ENCODE measurements at regions of chr2 and their contacts with region 1.

Region 1: DNA sequence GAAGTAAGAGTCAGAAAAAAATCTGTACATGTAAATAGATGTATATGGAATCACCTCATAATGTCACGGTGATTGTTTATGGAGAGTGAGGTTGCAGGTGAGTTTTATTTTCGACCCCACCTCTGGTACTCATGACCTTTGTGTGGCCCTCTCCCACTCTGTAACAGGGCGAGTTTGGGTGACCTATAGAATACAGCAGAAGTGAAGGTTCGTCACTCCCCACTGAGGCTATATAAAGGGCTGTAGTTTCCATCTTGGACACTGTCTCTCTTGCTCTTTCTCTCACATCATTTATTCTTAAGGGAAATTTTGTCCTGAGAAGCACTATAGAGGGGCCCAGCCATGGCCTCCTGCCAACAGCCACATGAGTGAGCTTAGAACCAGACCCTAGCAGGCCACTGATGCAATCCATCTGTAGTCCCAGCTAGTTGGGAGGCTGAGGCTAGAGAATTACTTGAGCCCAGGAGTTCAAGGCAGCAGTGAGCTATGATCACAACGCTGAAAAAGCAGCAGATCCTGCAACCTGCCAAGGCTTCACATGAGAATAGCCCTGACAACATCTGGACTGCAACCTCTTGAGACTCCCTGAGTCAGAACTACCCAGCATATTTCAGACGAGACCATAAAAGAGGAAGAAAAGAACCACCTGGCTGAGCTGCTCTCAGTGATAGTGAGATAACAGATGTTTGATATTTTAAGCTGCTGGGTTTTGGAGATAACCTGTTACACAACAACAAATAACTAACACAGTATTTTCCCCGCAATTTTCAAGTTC is 74.3 kb upstream of the SLC1A4 start:
- DNase-seq: no peak
- H3K4me3 Mint-ChIP-seq: no peak overlapping the region
- H3K27ac Mint-ChIP-seq: no peak overlapping the region
- H3K4me1 Mint-ChIP-seq: no peaks in the 10 kb centered on the region
- H3K27me3 Mint-ChIP-seq: no peaks in the 10 kb centered on the region
- CTCF ChIP-seq: no peak

Region 2: DNA sequence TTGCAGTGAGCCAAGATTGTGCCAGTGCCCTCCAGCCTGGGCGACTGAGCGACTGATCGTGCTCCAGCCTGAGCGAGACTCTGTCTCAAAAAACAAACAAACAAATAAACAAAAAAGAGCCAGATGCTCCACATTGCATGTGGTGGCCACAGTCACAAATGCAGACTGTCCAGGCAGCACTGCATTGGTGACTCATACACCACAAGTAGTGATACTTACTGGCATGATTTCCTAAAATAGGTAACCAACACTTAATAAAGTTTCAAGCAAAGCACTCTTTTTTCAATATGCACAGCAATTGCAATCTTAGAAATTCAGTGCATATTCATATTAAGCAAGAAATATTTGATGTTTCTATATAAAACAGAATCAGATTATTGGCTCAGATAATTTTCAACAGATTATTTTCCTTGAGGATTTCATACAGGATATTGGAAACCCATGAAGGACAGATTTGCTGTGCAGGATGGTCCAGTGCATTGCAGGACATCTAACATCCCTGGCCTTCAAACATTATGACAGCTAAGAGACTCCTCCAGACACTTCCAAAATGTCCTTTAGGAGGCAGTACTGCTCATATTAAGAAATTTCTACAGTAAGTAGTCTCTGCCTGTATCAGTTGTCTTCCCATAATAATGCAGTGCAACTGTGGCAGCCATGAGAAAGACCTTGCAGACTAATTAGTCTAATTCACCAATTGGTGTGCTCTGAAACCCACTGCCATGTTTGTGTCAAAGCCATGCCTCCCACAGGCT is 63.8 kb after region 1 on chr2:
- CTCF ChIA-PET with region 1: interaction called, 11 read pairs
- POLR2A ChIA-PET with region 1: interaction called, 3 read pairs
- intact Hi-C with region 1: no loop called
- DNase-seq: peak; percentile 45
- H3K4me3 Mint-ChIP-seq: no peak overlapping the region
- H3K27ac Mint-ChIP-seq: no peak overlapping the region
- H3K4me1 Mint-ChIP-seq: peaks cover 32% of the 10 kb centered on the region
- H3K27me3 Mint-ChIP-seq: no peaks in the 10 kb centered on the region
- CTCF ChIP-seq: no peak

Region 3: GRCh38 chr2:65024149-65024829 is 109.4 kb after region 1 on chr2:
- CTCF ChIA-PET with region 1: interaction called, 36 read pairs
- POLR2A ChIA-PET with region 1: no interaction called
- intact Hi-C with region 1: no loop called
- DNase-seq: peak; percentile 57
- H3K4me3 Mint-ChIP-seq: no peak overlapping the region
- H3K27ac Mint-ChIP-seq: peak overlapping the region; percentile 53
- H3K4me1 Mint-ChIP-seq: peaks cover 11% of the 10 kb centered on the region
- H3K27me3 Mint-ChIP-seq: no peaks in the 10 kb centered on the region
- CTCF ChIP-seq: no peak

Region 4: DNA sequence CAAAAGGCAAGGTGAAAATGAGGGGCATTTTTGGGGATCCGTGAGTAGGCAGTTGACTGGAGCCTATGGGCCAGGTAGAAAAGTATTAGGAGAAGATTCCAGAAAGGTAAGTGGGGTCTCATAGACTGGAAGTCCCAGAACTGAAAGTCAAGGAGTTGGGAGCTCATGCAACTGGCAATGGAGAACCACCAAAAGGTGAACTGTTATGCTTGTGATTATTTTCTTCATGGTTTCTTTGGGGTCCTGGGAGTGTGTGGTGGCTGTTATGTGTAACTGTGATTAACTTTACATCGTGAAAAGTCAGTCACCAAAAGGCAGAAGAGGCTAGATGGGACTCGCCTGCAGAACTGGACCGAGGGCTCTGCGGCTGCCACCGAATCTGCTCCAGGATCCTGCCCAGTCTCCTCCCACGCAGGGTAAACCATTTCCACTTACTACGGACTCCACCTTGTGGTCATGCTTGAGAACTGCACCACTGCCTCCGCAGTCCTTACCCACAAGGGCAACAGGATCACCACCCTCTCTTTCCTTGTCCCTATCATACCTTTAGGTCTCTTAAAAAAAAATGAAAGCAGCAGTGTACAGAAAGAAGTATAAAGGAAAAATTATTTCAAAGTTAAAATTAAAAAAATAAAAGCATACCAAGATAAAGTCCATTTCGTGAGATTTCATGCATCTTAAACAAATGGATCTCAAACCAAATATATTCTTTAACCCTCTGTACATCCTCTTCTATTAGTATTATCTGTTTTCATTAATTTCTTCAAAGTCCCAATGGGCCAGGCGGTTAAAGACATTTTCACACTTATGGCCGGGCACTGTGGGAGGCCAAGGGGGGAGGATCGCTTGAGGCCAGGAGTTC is 125.7 kb after region 1 on chr2:
- CTCF ChIA-PET with region 1: interaction called, 112 read pairs
- POLR2A ChIA-PET with region 1: interaction called, 3 read pairs
- intact Hi-C with region 1: loop called (anchors 1 kb)
- DNase-seq: peak; percentile 82
- H3K4me3 Mint-ChIP-seq: peak overlapping the region; percentile 65
- H3K27ac Mint-ChIP-seq: no peak overlapping the region
- H3K4me1 Mint-ChIP-seq: peaks cover 6% of the 10 kb centered on the region
- H3K27me3 Mint-ChIP-seq: no peaks in the 10 kb centered on the region
- CTCF ChIP-seq: peak; percentile 95

Region 5: GRCh38 chr2:65056215-65057053 is 141.5 kb after region 1 on chr2 and contains the start of gene CEP68:
- CTCF ChIA-PET with region 1: interaction called, 13 read pairs
- POLR2A ChIA-PET with region 1: interaction called, 4 read pairs
- intact Hi-C with region 1: no loop called
- DNase-seq: peak; percentile 97
- H3K4me3 Mint-ChIP-seq: peak within 1 kb of the TSS; percentile 90
- H3K27ac Mint-ChIP-seq: peak within 1 kb of the TSS; percentile 41
- H3K4me1 Mint-ChIP-seq: peaks cover 10% of the 10 kb centered on the region
- H3K27me3 Mint-ChIP-seq: no peaks in the 10 kb centered on the region
- CTCF ChIP-seq: no peak
- total RNA-seq, gene CEP68: 5.4 and 7.2 TPM in 2 replicates

Region 6: DNA sequence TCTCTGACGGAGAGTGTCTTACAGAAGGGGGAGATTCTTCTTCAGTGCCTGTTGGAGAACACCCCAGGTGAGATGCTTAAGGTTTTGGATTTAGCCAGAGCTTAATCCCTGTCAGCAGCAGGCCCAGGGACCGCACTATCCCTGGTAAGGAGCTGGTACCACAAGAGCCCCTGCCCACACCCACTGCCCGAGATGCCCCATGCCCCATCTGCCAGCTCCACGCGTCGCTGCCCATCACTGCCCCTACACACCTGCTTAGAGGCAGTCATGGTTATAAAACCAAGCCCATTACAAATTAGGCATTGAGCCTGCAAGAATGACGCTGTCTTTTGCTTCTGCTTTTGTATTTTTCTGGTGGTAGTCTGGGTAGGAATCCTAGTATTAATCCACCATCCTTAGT is 163.0 kb after region 1 on chr2:
- CTCF ChIA-PET with region 1: no interaction called
- POLR2A ChIA-PET with region 1: no interaction called
- intact Hi-C with region 1: no loop called
- DNase-seq: no peak
- H3K4me3 Mint-ChIP-seq: no peak overlapping the region
- H3K27ac Mint-ChIP-seq: no peak overlapping the region
- H3K4me1 Mint-ChIP-seq: peaks cover 9% of the 10 kb centered on the region
- H3K27me3 Mint-ChIP-seq: no peaks in the 10 kb centered on the region
- CTCF ChIP-seq: no peak

Region 7: DNA sequence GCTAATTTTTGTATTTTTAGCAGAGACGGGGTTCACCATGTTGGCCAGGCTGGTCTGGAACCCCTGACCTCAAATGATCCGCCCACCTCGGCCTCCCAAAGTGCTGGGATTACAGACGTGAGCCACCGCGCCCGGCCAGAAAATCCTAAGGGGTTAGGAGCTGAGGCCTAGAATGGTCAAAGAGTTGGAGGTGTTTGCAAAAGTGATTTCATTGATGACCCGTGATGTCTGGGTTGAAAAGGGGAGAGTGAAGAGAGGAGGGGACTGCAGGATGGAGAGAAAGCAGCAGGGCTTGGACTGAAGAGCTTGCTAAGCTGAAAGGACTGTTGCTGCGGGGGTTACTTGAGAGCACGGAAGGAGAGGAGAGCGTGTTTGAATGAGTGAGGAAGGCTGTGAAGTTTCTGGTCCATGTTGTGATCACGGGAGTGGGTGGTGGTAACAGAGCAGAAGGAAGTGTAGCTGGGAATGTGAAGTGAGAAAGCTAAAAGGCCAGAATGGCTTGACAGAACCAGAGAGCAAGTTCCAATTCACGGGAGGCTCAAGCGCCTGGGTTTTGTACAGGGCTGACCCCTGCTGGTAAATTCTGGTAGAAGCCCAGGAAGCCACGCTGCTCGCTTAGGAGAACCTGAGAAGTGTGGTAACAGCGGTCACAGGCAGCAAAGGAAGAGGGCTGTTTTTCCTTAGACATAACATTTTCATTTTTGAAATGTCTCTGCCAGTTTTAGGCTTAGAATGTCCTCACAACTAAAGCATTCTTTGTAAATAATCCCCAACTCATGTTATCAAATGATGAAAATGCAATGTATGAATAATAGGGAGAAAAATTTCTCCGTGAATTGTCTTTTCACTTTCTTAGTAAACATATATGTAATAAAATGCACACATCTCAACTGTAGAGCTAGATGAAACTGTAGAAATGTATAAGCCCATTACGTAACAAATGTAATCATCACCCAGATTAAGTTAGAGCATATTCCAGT is 272.2 kb after region 1 on chr2:
- CTCF ChIA-PET with region 1: interaction called, 4 read pairs
- POLR2A ChIA-PET with region 1: no interaction called
- intact Hi-C with region 1: loop called (anchors 1 kb)
- DNase-seq: peak; percentile 83
- H3K4me3 Mint-ChIP-seq: no peak overlapping the region
- H3K27ac Mint-ChIP-seq: no peak overlapping the region
- H3K4me1 Mint-ChIP-seq: peaks cover 5% of the 10 kb centered on the region
- H3K27me3 Mint-ChIP-seq: no peaks in the 10 kb centered on the region
- CTCF ChIP-seq: peak; percentile 67